Panc1 (cell line): ENCODE measurements at regions of chr6 and their contacts with region 1.

Region 1: GRCh38 chr6:111450087-111450486 is 32.9 kb downstream of the REV3L start:
- DNase-seq: no peak
- ATAC-seq: no peak
- H3K4me3 ChIP-seq: no peak overlapping the region
- H3K27ac ChIP-seq: no peak overlapping the region
- H3K4me1 ChIP-seq: peaks cover 14% of the 10 kb centered on the region
- H3K27me3 ChIP-seq: no peaks in the 10 kb centered on the region
- CTCF ChIP-seq: no peak

Region 2: GRCh38 chr6:111600154-111600553 is 150.1 kb after region 1 on chr6:
- CTCF ChIA-PET with region 1: no interaction called
- POLR2A ChIA-PET with region 1: interaction called, 23 read pairs
- in situ Hi-C with region 1: no loop called
- intact Hi-C with region 1: no loop called
- DNase-seq: no peak
- ATAC-seq: no peak
- H3K4me3 ChIP-seq: no peak overlapping the region
- H3K27ac ChIP-seq: peak overlapping the region; percentile 98
- H3K4me1 ChIP-seq: peaks cover 69% of the 10 kb centered on the region
- H3K27me3 ChIP-seq: no peaks in the 10 kb centered on the region
- CTCF ChIP-seq: no peak